GM12878 (cell line): ENCODE measurements at regions of chr12 and their contacts with region 1.

Region 1: DNA sequence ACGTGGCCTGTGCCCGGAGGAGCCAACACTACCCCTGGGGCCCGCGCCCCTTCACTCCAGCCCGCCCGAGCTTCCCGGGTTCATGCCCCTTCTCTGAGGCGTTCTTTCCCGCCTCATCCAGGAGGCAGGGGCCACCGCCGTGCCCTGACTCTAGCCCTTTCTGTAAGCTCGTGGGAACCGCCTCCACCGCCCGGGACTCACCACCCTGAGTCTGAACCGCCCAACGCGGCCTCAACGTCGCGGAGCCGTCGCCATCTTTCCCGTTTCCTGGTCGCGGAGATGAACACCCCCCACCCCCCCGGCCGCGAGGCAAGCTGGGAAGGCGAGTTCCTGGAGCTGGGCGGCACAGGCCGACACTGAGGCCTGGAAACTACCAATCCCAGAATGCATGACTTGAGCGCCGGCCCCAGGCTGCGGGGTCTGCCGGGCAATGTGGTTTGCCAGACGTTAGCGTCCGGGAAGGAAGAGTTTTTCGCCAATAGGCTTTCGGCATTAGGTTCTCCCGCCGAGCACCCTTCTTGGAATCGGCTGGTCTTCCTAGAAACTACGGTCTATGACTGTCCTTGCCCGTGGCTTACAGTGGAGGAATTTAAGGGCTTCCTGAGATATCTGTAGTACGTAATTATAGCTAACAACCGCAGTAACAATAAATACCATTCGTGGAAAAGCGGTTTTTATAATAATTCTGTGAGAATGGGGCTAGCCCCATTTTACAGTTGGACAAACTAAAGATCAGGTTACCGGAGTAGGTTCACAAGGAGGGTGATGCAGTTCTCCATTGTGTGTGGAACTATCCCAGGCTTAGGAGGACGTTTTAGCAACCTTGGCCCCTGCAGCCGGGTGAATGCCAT is at the start of gene DDX23:
- DNase-seq: peak; percentile 77
- ATAC-seq: peak; percentile 98
- H3K4me3 ChIP-seq: peak within 1 kb of the TSS; percentile 89
- H3K27ac ChIP-seq: peak within 1 kb of the TSS; percentile 90
- H3K4me1 ChIP-seq: peaks cover 10% of the 10 kb centered on the region; the same call in 1 of the 2 replicates
- H3K27me3 ChIP-seq: no peaks in the 10 kb centered on the region
- CTCF ChIP-seq: no peak
- EP300 ChIP-seq: no peak
- POLR2A ChIP-seq: peak; percentile 96
- RAD21 ChIP-seq: no peak
- polyA plus RNA-seq, gene DDX23: 25.8 to 36.3 TPM

Region 2: DNA sequence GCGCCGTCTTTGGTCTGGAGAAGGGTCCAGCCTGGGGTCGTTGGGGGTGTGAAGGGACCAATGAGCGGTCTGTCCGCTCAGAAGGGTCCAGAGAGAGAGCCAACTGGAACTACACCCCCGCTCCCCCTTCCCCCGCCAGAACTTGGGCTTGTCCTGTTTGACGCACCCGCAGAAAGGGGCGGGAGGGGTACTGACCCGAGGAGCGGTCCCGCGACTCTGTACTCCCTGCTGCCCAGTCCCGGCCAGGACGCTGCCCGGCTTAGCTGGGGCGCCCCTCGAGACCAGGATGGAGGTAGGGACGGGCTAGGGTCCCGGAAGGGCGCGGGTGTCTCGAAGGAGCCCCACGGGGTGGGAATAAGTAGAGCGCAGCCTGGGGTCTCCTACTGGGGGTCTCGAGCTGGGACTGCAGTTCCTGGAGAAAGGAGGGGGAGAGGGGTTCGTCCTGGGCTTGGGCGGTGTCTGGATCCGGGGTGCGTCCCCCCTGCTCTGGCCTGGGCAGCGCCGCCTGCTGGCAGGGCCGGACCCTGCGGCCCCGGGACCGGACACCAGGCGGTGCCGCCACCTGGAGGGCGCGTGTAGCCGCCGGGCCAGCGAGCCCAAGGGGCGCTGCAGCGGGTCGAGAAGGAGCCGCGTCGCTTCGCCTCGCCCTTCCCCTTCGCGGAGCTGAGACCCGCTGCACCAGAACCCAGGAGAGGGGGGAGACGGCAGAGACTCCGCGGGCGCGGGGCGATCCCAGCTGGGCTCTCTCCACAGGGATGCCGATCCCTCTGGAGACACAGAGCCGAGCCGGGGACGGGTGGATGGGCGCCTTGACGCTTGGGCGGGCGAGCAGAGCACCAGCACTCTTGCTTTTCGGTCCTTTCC is 37.6 kb before region 1 on chr12:
- CTCF ChIA-PET with region 1: interaction called, 58 read pairs
- POLR2A ChIA-PET with region 1: interaction called, 13 read pairs
- RAD21 ChIA-PET with region 1: interaction called, 13 read pairs
- SMC1A ChIA-PET with region 1: interaction called, 9 read pairs
- in situ Hi-C with region 1: no loop called
- intact Hi-C with region 1: no loop called
- DNase-seq: peak; percentile 31
- ATAC-seq: peak; percentile 92
- H3K4me3 ChIP-seq: peak overlapping the region; percentile 66
- H3K27ac ChIP-seq: no peak overlapping the region
- H3K4me1 ChIP-seq: peaks cover 7% of the 10 kb centered on the region
- H3K27me3 ChIP-seq: peaks cover 1 to 3% of the 10 kb centered on the region in 2 experiments; a peak in 3 of 4 replicates
- CTCF ChIP-seq: peak; percentile 96 to 100 (median 100); a peak in 5 of 6 replicates
- EP300 ChIP-seq: no peak
- POLR2A ChIP-seq: peak; percentile 75
- RAD21 ChIP-seq: peak; percentile 27

Region 3: DNA sequence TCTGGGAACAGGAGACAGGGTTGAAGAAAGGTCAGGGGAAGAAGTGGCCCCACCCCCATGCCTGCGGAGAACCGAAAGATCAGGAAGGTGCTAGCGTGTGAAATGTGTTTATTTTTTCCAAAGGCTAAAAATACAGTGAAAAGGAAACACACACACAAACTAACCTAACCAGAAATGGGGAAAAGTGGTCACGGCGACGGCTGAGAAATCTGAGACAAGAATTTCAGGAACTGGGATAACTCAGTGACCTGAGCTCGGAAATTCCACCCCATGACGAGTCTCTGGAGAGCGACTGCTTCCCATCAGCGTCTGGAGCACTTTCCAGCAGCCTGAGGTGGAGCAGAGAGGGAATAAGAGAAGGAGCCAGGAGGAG is 30.2 kb after region 1 on chr12:
- CTCF ChIA-PET with region 1: interaction called, 14 read pairs
- POLR2A ChIA-PET with region 1: interaction called, 5 read pairs
- RAD21 ChIA-PET with region 1: interaction called, 167 read pairs
- SMC1A ChIA-PET with region 1: interaction called, 10 read pairs
- in situ Hi-C with region 1: loop called (anchors 5 kb)
- intact Hi-C with region 1: no loop called
- DNase-seq: no peak
- ATAC-seq: no peak
- H3K4me3 ChIP-seq: no peak overlapping the region
- H3K27ac ChIP-seq: no peak overlapping the region
- H3K4me1 ChIP-seq: no peaks in the 10 kb centered on the region
- H3K27me3 ChIP-seq: peaks cover 4 to 12% of the 10 kb centered on the region in 2 experiments; a peak in 3 of 4 replicates
- CTCF ChIP-seq: no peak
- EP300 ChIP-seq: no peak
- POLR2A ChIP-seq: no peak
- RAD21 ChIP-seq: no peak

Region 4: DNA sequence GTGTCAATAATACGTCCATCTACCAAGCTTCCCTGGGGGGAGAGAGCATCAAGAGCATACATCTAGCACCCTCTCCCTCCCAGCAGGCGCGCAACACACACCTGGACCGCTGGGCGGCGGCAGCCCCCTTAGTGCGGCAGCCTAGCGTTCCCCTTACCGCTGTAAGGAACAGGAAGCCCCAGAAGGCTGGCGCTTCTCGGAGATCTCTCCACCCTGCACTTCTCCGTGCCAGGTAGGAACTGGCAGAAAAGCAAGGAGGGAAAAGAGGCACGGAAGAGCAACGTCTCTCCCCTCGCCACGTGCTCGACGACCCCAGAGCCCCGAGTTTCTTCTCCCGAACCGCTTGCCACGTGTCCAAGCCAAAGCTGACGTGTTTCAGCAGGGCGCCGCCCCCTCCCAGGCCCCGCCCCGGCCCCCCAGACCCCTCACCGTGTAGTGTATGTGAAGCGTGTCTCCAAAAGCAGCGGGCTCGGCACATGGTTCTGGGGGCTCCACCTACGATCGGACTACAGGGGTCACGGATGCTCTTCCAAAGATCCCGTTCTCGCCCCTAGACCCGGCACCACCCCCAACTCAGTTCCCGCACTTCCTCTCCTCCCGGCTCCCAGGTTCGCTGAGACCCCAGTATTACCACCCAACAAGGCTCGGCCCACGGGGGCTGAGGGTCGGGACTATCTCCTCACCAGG is 72.7 kb after region 1 on chr12:
- CTCF ChIA-PET with region 1: interaction called, 38 read pairs
- POLR2A ChIA-PET with region 1: interaction called, 4 read pairs
- RAD21 ChIA-PET with region 1: interaction called, 32 read pairs
- SMC1A ChIA-PET with region 1: interaction called, 23 read pairs
- in situ Hi-C with region 1: no loop called
- intact Hi-C with region 1: loop called (anchors 2 kb)
- DNase-seq: peak; percentile 40
- ATAC-seq: peak; percentile 92
- H3K4me3 ChIP-seq: peak overlapping the region; percentile 98
- H3K27ac ChIP-seq: peak overlapping the region; percentile 90
- H3K4me1 ChIP-seq: peaks cover 22% of the 10 kb centered on the region
- H3K27me3 ChIP-seq: no peaks in the 10 kb centered on the region
- CTCF ChIP-seq: peak; percentile 88 to 95 (median 93)
- EP300 ChIP-seq: no peak
- POLR2A ChIP-seq: no peak
- RAD21 ChIP-seq: peak; percentile 88

Region 5: GRCh38 chr12:48977315-48978281 is 125.5 kb after region 1 on chr12:
- CTCF ChIA-PET with region 1: interaction called, 31 read pairs
- POLR2A ChIA-PET with region 1: interaction called, 5 read pairs
- RAD21 ChIA-PET with region 1: interaction called, 18 read pairs
- SMC1A ChIA-PET with region 1: interaction called, 17 read pairs
- in situ Hi-C with region 1: no loop called
- intact Hi-C with region 1: loop called (anchors 1 kb)
- DNase-seq: no peak
- ATAC-seq: peak; percentile 84
- H3K4me3 ChIP-seq: no peak overlapping the region; the same call in 1 of the 2 replicates
- H3K27ac ChIP-seq: no peak overlapping the region
- H3K4me1 ChIP-seq: peaks cover 35% of the 10 kb centered on the region
- H3K27me3 ChIP-seq: peaks cover 37 to 44% of the 10 kb centered on the region in 2 experiments
- CTCF ChIP-seq: peak; percentile 61 to 82 (median 70); a peak in 5 of 6 replicates
- EP300 ChIP-seq: no peak; a peak in 1 of 4 replicates
- POLR2A ChIP-seq: no peak
- RAD21 ChIP-seq: peak; percentile 50

Region 6: GRCh38 chr12:49018261-49019119 is 166.4 kb after region 1 on chr12 and contains the start of gene PRKAG1:
- CTCF ChIA-PET with region 1: interaction called, 11 read pairs
- POLR2A ChIA-PET with region 1: interaction called, 4 read pairs
- RAD21 ChIA-PET with region 1: interaction called, 3 read pairs
- SMC1A ChIA-PET with region 1: interaction called, 3 read pairs
- in situ Hi-C with region 1: no loop called
- intact Hi-C with region 1: no loop called
- DNase-seq: peak; percentile 77
- ATAC-seq: peak; percentile 90
- H3K4me3 ChIP-seq: peak within 1 kb of the TSS; percentile 93
- H3K27ac ChIP-seq: peak within 1 kb of the TSS; percentile 93
- H3K4me1 ChIP-seq: 0 out of 2 replicates have a peak, but pooled peaks cover 3% of the 10 kb centered on the region
- H3K27me3 ChIP-seq: no peaks in the 10 kb centered on the region
- CTCF ChIP-seq: peak; percentile 57 to 71 (median 68)
- EP300 ChIP-seq: no peak
- POLR2A ChIP-seq: peak; percentile 90
- RAD21 ChIP-seq: peak; percentile 36; the same call in 1 of the 2 replicates
- polyA plus RNA-seq, gene PRKAG1: 61.5 to 70.9 TPM

Region 7: GRCh38 chr12:49388682-49389386 is 536.7 kb after region 1 on chr12:
- CTCF ChIA-PET with region 1: no interaction called
- POLR2A ChIA-PET with region 1: no interaction called
- RAD21 ChIA-PET with region 1: no interaction called
- SMC1A ChIA-PET with region 1: no interaction called
- in situ Hi-C with region 1: no loop called
- intact Hi-C with region 1: no loop called
- DNase-seq: no peak
- ATAC-seq: no peak
- H3K4me3 ChIP-seq: no peak overlapping the region
- H3K27ac ChIP-seq: no peak overlapping the region
- H3K4me1 ChIP-seq: no peaks in the 10 kb centered on the region
- H3K27me3 ChIP-seq: no peaks in the 10 kb centered on the region
- CTCF ChIP-seq: no peak
- EP300 ChIP-seq: no peak
- POLR2A ChIP-seq: no peak
- RAD21 ChIP-seq: no peak